ENCODE measurements at regions of chr5 and their contacts with region 1.

Region 1: GRCh38 chr5:151924564-151925301 is at the start of gene GLRA1:
- DNase-seq: peak; percentile 70
- H3K4me3 Mint-ChIP-seq: no peak within 1 kb of the TSS
- H3K27ac Mint-ChIP-seq: no peak within 1 kb of the TSS
- H3K4me1 Mint-ChIP-seq: no peaks in the 10 kb centered on the region
- H3K27me3 Mint-ChIP-seq: peaks cover 32% of the 10 kb centered on the region
- CTCF ChIP-seq: no peak
- total RNA-seq, gene GLRA1: not detected in 2 replicates

Region 2: DNA sequence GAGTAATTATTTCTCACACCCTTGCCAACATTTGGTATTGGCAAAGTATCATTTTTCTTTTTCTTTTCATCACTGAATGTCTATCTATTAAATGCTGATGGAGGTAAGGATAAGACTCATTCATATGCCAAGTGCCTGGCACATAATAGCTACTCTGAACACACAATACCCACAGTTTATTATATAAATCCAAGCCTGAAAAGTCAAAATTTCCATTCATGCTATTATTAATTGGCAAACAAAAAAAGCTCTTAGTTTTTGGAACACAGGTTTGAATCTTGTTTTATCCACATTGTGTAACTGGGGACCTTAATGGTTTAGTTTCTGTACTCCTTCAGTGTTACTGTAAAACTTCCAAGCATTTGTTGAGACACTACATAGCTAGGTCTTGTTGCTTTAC is 159.9 kb before region 1 on chr5:
- CTCF ChIA-PET with region 1: no interaction called
- POLR2A ChIA-PET with region 1: no interaction called
- intact Hi-C with region 1: no loop called
- DNase-seq: no peak
- H3K4me3 Mint-ChIP-seq: no peak overlapping the region
- H3K27ac Mint-ChIP-seq: no peak overlapping the region
- H3K4me1 Mint-ChIP-seq: peaks cover 2% of the 10 kb centered on the region
- H3K27me3 Mint-ChIP-seq: no peaks in the 10 kb centered on the region
- CTCF ChIP-seq: no peak

Region 3: DNA sequence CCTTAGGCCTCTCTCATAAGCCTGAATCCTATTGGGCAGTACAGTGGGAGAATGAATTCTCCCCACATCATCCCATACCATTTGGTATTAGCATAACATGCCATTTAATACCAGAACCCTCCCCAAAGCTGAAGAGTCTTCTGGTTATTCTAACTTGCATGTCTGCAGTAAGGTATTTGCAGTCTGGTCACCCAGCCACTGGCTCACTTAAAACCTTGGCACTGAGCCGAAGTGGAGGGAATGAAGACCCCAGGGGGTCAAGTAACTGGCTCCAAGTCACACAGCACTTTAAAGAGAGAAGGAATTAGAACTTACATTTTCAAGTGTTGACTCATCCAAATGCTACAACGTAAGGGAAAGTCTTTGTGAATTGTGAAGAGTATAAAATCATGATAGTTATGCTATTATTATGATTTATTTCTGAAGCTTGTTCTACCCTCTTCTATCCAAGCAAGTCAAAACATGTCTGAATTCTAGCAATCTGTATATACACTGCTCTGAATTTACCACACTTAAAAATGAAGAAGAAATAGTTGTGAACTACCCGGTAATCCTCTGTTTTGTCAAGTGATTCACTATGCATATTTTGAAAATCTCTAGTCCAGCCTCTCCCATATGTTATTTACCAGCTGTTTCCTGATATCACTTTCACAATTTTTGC is 28.6 kb before region 1 on chr5:
- CTCF ChIA-PET with region 1: no interaction called
- POLR2A ChIA-PET with region 1: interaction called, 3 read pairs
- intact Hi-C with region 1: loop called (anchors 2 kb)
- DNase-seq: peak; percentile 65
- H3K4me3 Mint-ChIP-seq: peak overlapping the region; percentile 30
- H3K27ac Mint-ChIP-seq: peak overlapping the region; percentile 68
- H3K4me1 Mint-ChIP-seq: peaks cover 23% of the 10 kb centered on the region
- H3K27me3 Mint-ChIP-seq: no peaks in the 10 kb centered on the region
- CTCF ChIP-seq: no peak

Measured in MCF 10A (cell line).